ENCODE measurements at regions of chr18 and their contacts with region 1.

Region 1: GRCh38 chr18:1663879-1664705 is 759.4 kb downstream of the ADCYAP1 start:
- H3K4me3 ChIP-seq: no peak overlapping the region
- H3K27ac ChIP-seq: no peak overlapping the region
- H3K4me1 ChIP-seq: no peaks in the 10 kb centered on the region
- CTCF ChIP-seq: peak; percentile 32; the same call in 1 of the 2 replicates

Region 2: DNA sequence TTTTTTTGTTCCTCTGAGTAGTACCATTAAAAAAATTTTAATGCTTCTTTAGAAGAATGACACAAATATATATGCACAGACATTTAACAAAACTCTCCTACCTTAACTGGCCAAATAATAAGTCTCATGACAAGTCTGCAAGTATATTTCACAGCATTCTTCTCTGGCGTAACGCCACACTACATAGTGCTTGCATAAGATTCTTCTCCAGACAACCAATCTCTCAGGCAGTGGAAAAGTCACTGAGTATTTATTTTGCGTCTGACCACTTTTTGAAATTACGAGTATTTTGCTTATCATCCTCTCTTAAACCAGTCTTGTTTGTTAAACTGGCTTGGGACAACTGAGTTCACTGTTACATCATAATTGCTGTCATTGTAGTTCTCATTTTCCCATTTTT is 10.2 kb before region 1 on chr18:
- CTCF ChIA-PET with region 1: interaction called, 12 read pairs
- POLR2A ChIA-PET with region 1: no interaction called
- H3K4me3 ChIP-seq: no peak overlapping the region
- H3K27ac ChIP-seq: no peak overlapping the region
- H3K4me1 ChIP-seq: no peaks in the 10 kb centered on the region
- CTCF ChIP-seq: no peak

Region 3: DNA sequence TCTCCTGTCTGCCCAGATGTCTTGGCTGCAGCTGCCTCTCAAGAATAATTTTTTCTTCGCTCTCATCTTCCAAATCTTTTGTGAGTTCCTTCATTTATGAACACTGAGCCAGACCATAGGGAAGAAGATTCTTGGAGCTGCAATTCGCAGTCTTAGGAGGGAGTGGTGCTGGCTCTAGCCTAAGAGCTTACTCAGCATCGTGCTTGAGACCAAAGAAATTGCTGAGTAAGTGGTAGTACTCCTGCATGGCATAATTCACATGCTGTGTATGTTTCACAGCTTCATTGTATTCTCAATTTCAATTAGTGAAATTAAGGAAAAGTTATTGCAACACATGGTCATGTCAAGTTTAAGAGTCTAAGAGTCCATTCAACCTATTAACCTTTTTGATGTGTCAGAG is 12.3 kb after region 1 on chr18:
- CTCF ChIA-PET with region 1: interaction called, 14 read pairs
- POLR2A ChIA-PET with region 1: no interaction called
- H3K4me3 ChIP-seq: no peak overlapping the region
- H3K27ac ChIP-seq: no peak overlapping the region
- H3K4me1 ChIP-seq: no peaks in the 10 kb centered on the region
- CTCF ChIP-seq: no peak

Region 4: GRCh38 chr18:1766464-1766863 is 102.4 kb after region 1 on chr18:
- CTCF ChIA-PET with region 1: no interaction called
- POLR2A ChIA-PET with region 1: no interaction called
- H3K4me3 ChIP-seq: no peak overlapping the region
- H3K27ac ChIP-seq: no peak overlapping the region
- H3K4me1 ChIP-seq: no peaks in the 10 kb centered on the region
- CTCF ChIP-seq: no peak

Region 5: GRCh38 chr18:1797235-1797634 is 133.1 kb after region 1 on chr18:
- CTCF ChIA-PET with region 1: no interaction called
- POLR2A ChIA-PET with region 1: no interaction called
- H3K4me3 ChIP-seq: no peak overlapping the region
- H3K27ac ChIP-seq: no peak overlapping the region
- H3K4me1 ChIP-seq: no peaks in the 10 kb centered on the region
- CTCF ChIP-seq: no peak

Measured in HEK293 (cell line).